Aorta (tissue), 5 donors: ENCODE measurements at regions of chr1 and their contacts with region 1.

Region 1: DNA sequence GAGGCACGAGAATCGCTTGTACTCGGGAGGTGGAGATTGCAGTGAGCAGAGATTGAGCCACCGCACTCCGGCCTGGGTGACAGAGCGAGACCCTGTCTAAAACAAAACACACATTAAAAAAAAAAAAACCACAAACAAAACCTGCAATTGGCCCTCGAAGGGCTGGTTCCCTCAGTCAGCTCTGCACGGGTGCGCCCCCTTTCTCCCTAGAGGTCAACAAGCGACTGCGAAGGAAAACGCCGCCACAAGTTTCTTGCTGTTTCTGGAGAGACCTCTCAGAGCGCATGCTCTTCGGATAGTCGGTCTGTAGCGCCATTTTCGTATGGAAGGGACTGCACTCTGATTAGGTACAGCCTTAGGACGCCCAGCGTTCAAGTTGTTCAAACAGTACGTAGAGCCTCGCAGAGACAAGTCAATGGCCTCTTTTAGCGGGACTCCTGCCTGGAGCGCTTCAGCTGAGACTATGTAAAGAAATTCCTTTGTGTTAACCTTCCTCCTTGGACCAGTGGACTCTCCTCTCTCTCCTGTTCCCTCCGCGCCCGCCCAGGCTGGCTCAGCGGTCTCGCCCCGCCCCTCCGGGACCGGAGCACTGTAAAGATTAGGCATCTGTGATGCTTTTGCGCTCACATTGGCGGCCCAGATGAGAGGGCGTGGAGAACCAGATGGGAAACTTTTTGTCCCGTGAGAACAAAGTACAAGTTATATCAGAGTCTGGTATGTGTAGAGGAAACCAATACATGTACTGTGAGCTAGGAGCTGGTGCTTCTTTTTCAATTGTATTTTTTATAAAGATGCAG is 1.0 kb upstream of the CDC14A start:
- DNase-seq: peak; percentile 90 to 95
- ATAC-seq: peak; percentile 89
- H3K4me3 ChIP-seq: peak overlapping the region; percentile 86 to 93
- H3K27ac ChIP-seq: peak overlapping the region in 1 of 2 donors; percentile 85
- H3K4me1 ChIP-seq: peaks cover 0 to 2% of the 10 kb centered on the region in 2 donors
- H3K27me3 ChIP-seq: no peaks in the 10 kb centered on the region

Region 2: DNA sequence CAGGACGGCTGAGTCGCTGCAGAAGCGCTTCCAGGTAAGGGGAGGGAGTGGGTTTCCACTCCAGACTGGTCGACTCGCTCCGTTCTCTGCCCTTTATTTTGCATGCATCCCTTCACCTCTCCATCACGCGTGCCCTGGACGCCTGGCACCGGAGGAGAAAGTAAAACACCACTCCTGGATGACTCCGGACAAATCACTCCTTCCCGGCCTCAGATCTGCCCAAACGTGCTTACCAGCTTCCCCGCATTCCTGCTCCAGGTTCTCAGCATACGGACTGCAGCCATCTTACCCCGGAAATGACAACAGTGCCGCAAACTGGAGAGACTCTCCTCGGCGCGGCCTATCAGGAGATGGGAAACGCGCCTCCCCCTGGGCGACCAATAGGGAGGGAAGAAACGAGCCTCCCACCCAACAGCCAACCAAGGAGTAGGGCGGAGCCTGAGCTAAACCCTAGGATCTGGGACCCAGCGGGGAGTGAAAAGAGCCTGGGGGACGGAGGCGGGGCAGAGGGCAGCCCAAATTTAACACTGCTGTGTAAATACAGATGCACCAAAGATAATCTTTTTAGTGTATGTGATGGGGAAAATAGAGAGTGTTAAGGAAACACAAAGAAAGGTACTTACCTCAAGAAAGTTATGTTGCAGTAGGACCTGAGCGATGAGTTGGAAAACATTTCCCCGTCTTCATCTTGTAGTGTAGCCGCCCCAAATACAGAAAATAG is 101.6 kb before region 1 on chr1 and contains the start of gene DBT:
- intact Hi-C with region 1: loop called in 1 of 2 experiments (anchors 2 kb)
- DNase-seq: peak; percentile 96 to 97
- ATAC-seq: peak; percentile 100
- H3K4me3 ChIP-seq: peak within 1 kb of the TSS; percentile 75 to 91
- H3K27ac ChIP-seq: peak within 1 kb of the TSS; percentile 47 to 90
- H3K4me1 ChIP-seq: peaks cover 0 to 3% of the 10 kb centered on the region in 2 donors
- H3K27me3 ChIP-seq: peaks cover 0 to 2% of the 10 kb centered on the region in 2 donors
- total RNA-seq, gene DBT: 10.8 to 13.0 TPM